HepG2 (cell line): ENCODE measurements at regions of chr11 and their contacts with region 1.

Region 1: DNA sequence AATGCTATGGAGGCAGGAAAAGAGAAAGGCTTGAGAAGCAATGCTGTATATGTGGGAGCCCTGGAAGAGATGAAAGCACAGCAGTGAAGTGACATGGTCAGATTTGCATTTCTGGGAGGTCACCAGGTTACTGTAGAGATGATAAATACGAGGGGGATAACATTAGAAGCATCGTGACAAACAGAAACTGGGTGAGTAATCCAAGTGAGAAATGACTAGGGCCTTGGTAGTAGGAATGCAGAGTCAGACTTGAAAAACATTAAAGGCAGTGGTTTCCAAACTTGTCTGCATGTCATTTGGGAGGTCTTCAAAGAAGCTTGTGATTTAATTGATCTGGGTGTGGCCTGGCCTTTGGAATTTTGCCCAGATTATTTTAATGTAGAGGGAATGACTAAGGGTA is 43.9 kb downstream of the CCDC34 start:
- DNase-seq: peak; percentile 48
- ATAC-seq: no peak
- H3K4me3 ChIP-seq: no peak overlapping the region
- H3K27ac ChIP-seq: no peak overlapping the region
- H3K4me1 ChIP-seq: peaks cover 46% of the 10 kb centered on the region
- H3K27me3 ChIP-seq: no peaks in the 10 kb centered on the region
- CTCF ChIP-seq: no peak
- EP300 ChIP-seq: no peak
- POLR2A ChIP-seq: no peak
- RAD21 ChIP-seq: no peak

Region 2: GRCh38 chr11:27362749-27363575 is 43.9 kb after region 1 on chr11 and contains the start of gene CCDC34:
- CTCF ChIA-PET with region 1: no interaction called
- POLR2A ChIA-PET with region 1: no interaction called
- in situ Hi-C with region 1: no loop called
- intact Hi-C with region 1: loop called (anchors 5 kb)
- DNase-seq: peak; percentile 87
- ATAC-seq: peak; percentile 96
- H3K4me3 ChIP-seq: peak within 1 kb of the TSS; percentile 59 to 88 (median 66)
- H3K27ac ChIP-seq: peak within 1 kb of the TSS; percentile 76
- H3K4me1 ChIP-seq: peaks cover 55% of the 10 kb centered on the region
- H3K27me3 ChIP-seq: no peaks in the 10 kb centered on the region; a peak in 1 of 5 replicates
- CTCF ChIP-seq: peak; percentile 42
- EP300 ChIP-seq: no peak
- POLR2A ChIP-seq: peak; percentile 51 to 69; a peak in 3 of 4 replicates
- RAD21 ChIP-seq: peak; percentile 84
- total RNA-seq, gene CCDC34: 34.3 and 37.9 TPM in 2 replicates

Region 3: GRCh38 chr11:27373856-27374602 is 55.0 kb after region 1 on chr11:
- CTCF ChIA-PET with region 1: no interaction called
- POLR2A ChIA-PET with region 1: no interaction called
- in situ Hi-C with region 1: no loop called
- intact Hi-C with region 1: no loop called
- DNase-seq: peak; percentile 90
- ATAC-seq: peak; percentile 92
- H3K4me3 ChIP-seq: peak overlapping the region in 2 of 3 experiments; percentile 26 to 28; a peak in 1 of 6 replicates
- H3K27ac ChIP-seq: peak overlapping the region; percentile 78
- H3K4me1 ChIP-seq: peaks cover 44% of the 10 kb centered on the region
- H3K27me3 ChIP-seq: no peaks in the 10 kb centered on the region
- CTCF ChIP-seq: no peak
- EP300 ChIP-seq: peak in 1 of 2 experiments; percentile 94; a peak in 2 of 4 replicates
- POLR2A ChIP-seq: no peak
- RAD21 ChIP-seq: no peak